ENCODE measurements at regions of chr17 and their contacts with region 1.

Region 1: DNA sequence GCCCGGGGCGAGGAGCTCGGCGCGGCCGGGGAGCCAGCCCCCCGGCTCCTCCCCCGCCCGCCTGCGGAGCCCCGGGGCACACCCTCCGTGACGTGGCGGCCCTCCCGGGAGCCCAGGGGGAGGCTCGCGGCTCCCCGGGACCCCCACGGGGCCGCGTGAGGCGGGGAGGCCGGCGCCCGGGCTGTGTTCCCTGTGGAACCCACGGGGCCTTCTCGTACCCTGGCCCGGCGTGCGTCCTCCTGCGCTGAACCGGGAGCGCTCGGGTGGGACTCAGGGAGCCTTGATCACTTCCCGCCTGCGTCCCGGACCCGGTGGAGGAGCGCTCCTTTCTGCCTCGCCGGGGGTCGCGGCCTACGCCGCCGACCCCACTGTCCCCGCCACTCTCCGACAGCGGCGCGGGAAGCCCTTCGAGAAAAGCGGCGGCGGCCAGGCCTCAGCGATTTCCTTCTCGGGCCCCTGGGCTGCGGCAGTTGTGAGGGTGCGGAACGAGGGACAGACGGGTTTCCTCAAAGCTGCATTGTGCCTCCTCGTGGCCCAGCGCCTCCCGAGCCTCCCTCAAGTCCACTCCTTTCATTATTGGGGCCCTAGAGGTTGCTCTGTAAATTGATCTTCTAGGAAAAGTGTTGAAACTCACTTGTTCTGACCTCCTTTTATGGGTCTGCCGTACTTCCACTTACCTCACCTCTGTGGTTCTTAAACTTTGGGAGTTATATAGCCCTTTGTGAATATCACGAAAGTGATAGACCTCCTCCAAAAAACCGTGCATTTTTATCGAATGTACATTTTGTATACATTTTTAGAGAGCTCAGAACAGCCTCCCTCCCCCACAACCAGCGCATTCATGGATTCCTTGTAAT is 597 bp downstream of the LIG3 start:
- DNase-seq: peak in 9 of 10 donors; percentile 65 to 86 (median 73)
- ATAC-seq: peak; percentile 82 to 84
- H3K4me3 Mint-ChIP-seq: peak overlapping the region; percentile 86 to 97 (median 92)
- H3K27ac Mint-ChIP-seq: peak overlapping the region; percentile 92 to 99 (median 98)
- H3K4me1 Mint-ChIP-seq: peaks cover 30 to 53% (median 53%) of the 10 kb centered on the region in 4 donors
- H3K27me3 Mint-ChIP-seq: no peaks in the 10 kb centered on the region

Region 2: DNA sequence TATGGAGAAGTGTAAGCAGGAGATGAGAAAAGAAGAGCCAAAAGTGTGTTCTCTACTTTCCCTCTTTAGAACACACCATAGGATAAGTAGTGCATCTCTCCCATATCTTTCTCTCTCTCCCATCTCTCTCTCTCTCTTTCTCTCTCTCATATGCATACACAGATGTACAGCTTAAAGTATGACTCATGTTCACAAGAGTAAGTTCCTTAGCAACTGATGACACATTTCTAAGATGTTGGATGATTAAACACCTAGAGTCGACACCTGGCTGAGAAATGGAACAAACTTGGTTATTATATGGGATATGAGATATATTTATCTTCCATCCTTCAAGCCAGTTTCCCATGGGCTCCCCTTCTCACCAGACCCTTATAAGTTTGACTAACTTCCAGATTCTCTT is 288.0 kb before region 1 on chr17:
- POLR2A ChIA-PET with region 1: no interaction called
- DNase-seq: no peak
- ATAC-seq: no peak
- H3K4me3 Mint-ChIP-seq: no peak overlapping the region
- H3K27ac Mint-ChIP-seq: no peak overlapping the region
- H3K4me1 Mint-ChIP-seq: no peaks in the 10 kb centered on the region
- H3K27me3 Mint-ChIP-seq: peaks cover 17 to 35% (median 20%) of the 10 kb centered on the region in 5 donors

Region 3: GRCh38 chr17:34920676-34921075 is 60.2 kb before region 1 on chr17:
- POLR2A ChIA-PET with region 1: no interaction called
- DNase-seq: no peak
- ATAC-seq: no peak
- H3K4me3 Mint-ChIP-seq: no peak overlapping the region
- H3K27ac Mint-ChIP-seq: no peak overlapping the region
- H3K4me1 Mint-ChIP-seq: no peaks in the 10 kb centered on the region
- H3K27me3 Mint-ChIP-seq: no peaks in the 10 kb centered on the region

Region 4: GRCh38 chr17:34961093-34961911 is 19.6 kb before region 1 on chr17 and contains the starts of genes CCT6B and ZNF830:
- POLR2A ChIA-PET with region 1: interaction called, 28 read pairs
- DNase-seq: peak; percentile 75 to 96 (median 90)
- ATAC-seq: peak; percentile 89 to 90
- H3K4me3 Mint-ChIP-seq: peak within 1 kb of the TSS; percentile 95 to 100 (median 100)
- H3K27ac Mint-ChIP-seq: peak within 1 kb of the TSS; percentile 99 to 100 (median 100)
- H3K4me1 Mint-ChIP-seq: peaks cover 31 to 34% (median 32%) of the 10 kb centered on the region in 4 donors
- H3K27me3 Mint-ChIP-seq: peaks cover 1 to 9% (median 8%) of the 10 kb centered on the region in 5 donors
- polyA plus RNA-seq, gene CCT6B: 0.35 to 2.4 (median 1.3) TPM
- polyA plus RNA-seq, gene ZNF830: 17.4 to 27.6 (median 18.7) TPM

Region 5: DNA sequence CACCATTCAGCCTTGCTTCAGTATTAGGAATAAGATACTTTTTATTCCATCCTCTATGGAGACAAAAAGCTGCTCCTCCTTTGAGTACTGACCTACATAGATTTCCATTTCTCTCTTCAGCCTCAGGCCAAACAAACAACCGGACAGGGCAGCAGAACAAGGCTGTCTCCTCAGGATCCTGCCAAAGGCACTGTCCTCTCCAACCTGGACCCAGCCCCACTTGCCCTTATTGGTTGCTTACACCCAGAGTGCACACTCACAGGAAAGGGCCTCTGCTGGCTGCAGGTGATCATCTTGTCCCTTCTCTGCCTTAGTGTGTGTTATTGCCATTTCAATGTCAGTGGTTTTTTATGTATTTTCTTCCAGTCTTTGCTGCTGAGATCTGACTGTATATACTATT is 26.0 kb after region 1 on chr17:
- POLR2A ChIA-PET with region 1: no interaction called
- DNase-seq: no peak
- ATAC-seq: no peak
- H3K4me3 Mint-ChIP-seq: no peak overlapping the region
- H3K27ac Mint-ChIP-seq: peak overlapping the region; percentile 2 to 83 (median 64)
- H3K4me1 Mint-ChIP-seq: peaks cover 0 to 7% (median 2%) of the 10 kb centered on the region in 4 donors
- H3K27me3 Mint-ChIP-seq: no peaks in the 10 kb centered on the region

Region 6: GRCh38 chr17:35022536-35023063 is 41.7 kb after region 1 on chr17:
- POLR2A ChIA-PET with region 1: interaction called, 16 read pairs
- DNase-seq: peak; percentile 23 to 77 (median 50)
- ATAC-seq: peak; percentile 98 to 100
- H3K4me3 Mint-ChIP-seq: peak overlapping the region; percentile 36 to 79 (median 68)
- H3K27ac Mint-ChIP-seq: peak overlapping the region; percentile 94 to 99 (median 96)
- H3K4me1 Mint-ChIP-seq: peaks cover 15 to 60% (median 50%) of the 10 kb centered on the region in 4 donors
- H3K27me3 Mint-ChIP-seq: no peaks in the 10 kb centered on the region

Region 7: GRCh38 chr17:35119368-35120165 is 138.7 kb after region 1 on chr17 and contains the start of gene RAD51D:
- POLR2A ChIA-PET with region 1: interaction called, 10 read pairs
- DNase-seq: peak; percentile 67 to 87 (median 84)
- ATAC-seq: peak; percentile 91
- H3K4me3 Mint-ChIP-seq: peak within 1 kb of the TSS; percentile 84 to 98 (median 96)
- H3K27ac Mint-ChIP-seq: peak within 1 kb of the TSS; percentile 87 to 98 (median 96)
- H3K4me1 Mint-ChIP-seq: peaks cover 15 to 54% (median 39%) of the 10 kb centered on the region in 4 donors
- H3K27me3 Mint-ChIP-seq: no peaks in the 10 kb centered on the region
- polyA plus RNA-seq, gene RAD51D: 6.5 to 13.6 (median 8.4) TPM